CD4-positive, alpha-beta T cell (primary cell): ENCODE measurements at regions of chr16 and their contacts with region 1.

Region 1: GRCh38 chr16:30628627-30629540 is 18.7 kb upstream of the ZNF689 start:
- DNase-seq: peak; percentile 78 to 93 (median 87)
- ATAC-seq: peak; percentile 99
- H3K4me3 ChIP-seq: peak overlapping the region; percentile 29
- H3K4me3 Mint-ChIP-seq: peak overlapping the region; percentile 59
- H3K27ac ChIP-seq: no peak overlapping the region
- H3K27ac Mint-ChIP-seq: peak overlapping the region; percentile 71
- H3K4me1 ChIP-seq: peaks cover 13% of the 10 kb centered on the region
- H3K4me1 Mint-ChIP-seq: peaks cover 9% of the 10 kb centered on the region
- H3K27me3 ChIP-seq: no peaks in the 10 kb centered on the region
- H3K27me3 Mint-ChIP-seq: no peaks in the 10 kb centered on the region
- CTCF ChIP-seq: peak; percentile 90

Region 2: DNA sequence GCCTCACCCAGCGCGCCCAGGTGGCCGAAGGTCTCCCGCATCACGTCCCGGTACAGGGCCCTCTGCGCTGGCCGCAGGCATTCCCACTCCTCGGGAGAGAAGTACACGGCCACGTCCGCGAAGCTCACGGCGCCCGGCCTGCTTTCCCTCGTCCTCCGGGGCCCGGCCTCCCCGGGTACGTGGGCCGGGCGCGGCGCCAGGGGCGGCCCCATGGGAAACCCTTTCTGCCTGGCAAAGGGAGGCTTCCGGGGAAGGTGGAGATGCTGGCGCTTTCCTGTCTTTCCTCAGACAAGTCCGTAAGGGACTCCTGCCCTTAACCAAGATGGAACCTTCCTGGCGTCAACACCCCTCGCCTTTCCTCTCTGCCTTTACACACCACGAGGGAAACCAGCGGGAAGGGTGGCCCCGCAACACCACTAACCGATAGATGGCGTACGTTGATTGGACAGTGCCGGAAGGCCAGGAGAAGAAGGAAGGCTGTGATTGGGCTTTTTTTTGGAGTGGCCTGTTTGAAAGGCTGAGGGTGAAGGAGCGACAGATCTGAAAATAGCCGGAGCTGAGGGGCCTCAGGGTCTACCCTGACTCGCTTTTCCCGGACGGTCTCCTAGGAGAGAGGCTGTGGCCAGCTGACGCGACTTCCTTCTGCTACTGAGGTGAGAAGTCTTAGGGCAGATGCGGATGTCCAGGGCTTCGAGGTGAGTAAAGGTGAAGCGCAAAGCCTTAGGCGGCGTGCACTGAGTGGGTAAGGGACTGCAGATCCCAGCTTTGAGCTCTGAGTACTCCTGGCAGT is 43.3 kb before region 1 on chr16 and contains the start of gene ZNF785:
- CTCF ChIA-PET with region 1: interaction called, 4 read pairs
- POLR2A ChIA-PET with region 1: no interaction called
- intact Hi-C with region 1: loop called in 1 of 2 experiments (anchors 2 kb)
- DNase-seq: peak; percentile 81 to 97 (median 87)
- ATAC-seq: peak; percentile 99
- H3K4me3 ChIP-seq: peak within 1 kb of the TSS; percentile 64
- H3K4me3 Mint-ChIP-seq: peak within 1 kb of the TSS; percentile 92
- H3K27ac ChIP-seq: peak within 1 kb of the TSS; percentile 53 to 57
- H3K27ac Mint-ChIP-seq: peak within 1 kb of the TSS; percentile 93
- H3K4me1 ChIP-seq: peaks cover 26% of the 10 kb centered on the region
- H3K4me1 Mint-ChIP-seq: peaks cover 18% of the 10 kb centered on the region
- H3K27me3 ChIP-seq: no peaks in the 10 kb centered on the region
- H3K27me3 Mint-ChIP-seq: no peaks in the 10 kb centered on the region
- CTCF ChIP-seq: no peak
- total RNA-seq, gene ZNF785: 6.6 to 7.7 TPM

Region 3: DNA sequence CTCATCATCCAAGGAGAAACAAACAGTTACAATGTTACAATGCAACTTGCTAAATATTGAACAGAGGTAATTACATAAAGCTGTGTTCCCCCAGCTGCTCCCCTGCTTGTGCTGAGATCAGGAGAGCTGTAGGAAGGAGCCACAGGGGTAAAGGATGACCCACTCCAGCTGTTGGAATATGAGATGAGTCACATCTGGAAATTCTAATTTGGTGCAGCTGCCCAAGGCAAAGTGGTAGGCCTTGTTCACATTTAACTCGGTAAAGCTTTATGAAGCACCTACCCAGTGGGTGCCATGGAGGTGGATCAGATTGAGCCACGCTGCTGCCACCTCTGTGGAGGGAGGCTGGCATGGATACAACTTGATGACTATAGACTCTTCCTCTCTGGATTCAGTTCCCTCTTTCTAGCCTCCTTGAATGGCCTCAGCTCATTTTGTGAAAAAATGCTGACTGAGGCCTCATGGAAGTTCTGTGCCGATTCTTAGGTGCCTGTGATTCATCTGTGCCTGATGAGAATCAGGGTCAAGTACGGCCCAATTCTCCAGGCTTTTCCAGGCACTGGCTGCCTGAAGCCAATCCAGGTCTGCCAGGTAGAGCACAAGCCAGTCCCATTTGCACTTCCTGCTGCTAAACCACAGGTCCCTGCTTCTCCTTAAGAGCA is 26.1 kb before region 1 on chr16:
- CTCF ChIA-PET with region 1: interaction called, 15 read pairs
- POLR2A ChIA-PET with region 1: no interaction called
- intact Hi-C with region 1: no loop called
- DNase-seq: peak in 2 of 14 experiments; percentile 20 to 26
- ATAC-seq: no peak
- H3K4me3 ChIP-seq: no peak overlapping the region
- H3K4me3 Mint-ChIP-seq: no peak overlapping the region
- H3K27ac ChIP-seq: no peak overlapping the region
- H3K27ac Mint-ChIP-seq: no peak overlapping the region
- H3K4me1 ChIP-seq: peaks cover 7% of the 10 kb centered on the region
- H3K4me1 Mint-ChIP-seq: peaks cover 9% of the 10 kb centered on the region
- H3K27me3 ChIP-seq: no peaks in the 10 kb centered on the region
- H3K27me3 Mint-ChIP-seq: no peaks in the 10 kb centered on the region
- CTCF ChIP-seq: no peak

Region 4: GRCh38 chr16:30609926-30610839 is 18.7 kb before region 1 on chr16 and contains the start of gene ZNF689:
- CTCF ChIA-PET with region 1: interaction called, 8 read pairs
- POLR2A ChIA-PET with region 1: interaction called, 7 read pairs
- intact Hi-C with region 1: loop called (anchors 1 kb)
- DNase-seq: peak; percentile 88 to 97 (median 94)
- ATAC-seq: peak; percentile 92
- H3K4me3 ChIP-seq: peak within 1 kb of the TSS; percentile 74
- H3K4me3 Mint-ChIP-seq: peak within 1 kb of the TSS; percentile 91
- H3K27ac ChIP-seq: peak within 1 kb of the TSS; percentile 86 to 89
- H3K27ac Mint-ChIP-seq: peak within 1 kb of the TSS; percentile 93
- H3K4me1 ChIP-seq: peaks cover 26% of the 10 kb centered on the region
- H3K4me1 Mint-ChIP-seq: peaks cover 23% of the 10 kb centered on the region
- H3K27me3 ChIP-seq: no peaks in the 10 kb centered on the region
- H3K27me3 Mint-ChIP-seq: no peaks in the 10 kb centered on the region
- CTCF ChIP-seq: no peak
- total RNA-seq, gene ZNF689: 15.3 to 15.7 TPM

Region 5: DNA sequence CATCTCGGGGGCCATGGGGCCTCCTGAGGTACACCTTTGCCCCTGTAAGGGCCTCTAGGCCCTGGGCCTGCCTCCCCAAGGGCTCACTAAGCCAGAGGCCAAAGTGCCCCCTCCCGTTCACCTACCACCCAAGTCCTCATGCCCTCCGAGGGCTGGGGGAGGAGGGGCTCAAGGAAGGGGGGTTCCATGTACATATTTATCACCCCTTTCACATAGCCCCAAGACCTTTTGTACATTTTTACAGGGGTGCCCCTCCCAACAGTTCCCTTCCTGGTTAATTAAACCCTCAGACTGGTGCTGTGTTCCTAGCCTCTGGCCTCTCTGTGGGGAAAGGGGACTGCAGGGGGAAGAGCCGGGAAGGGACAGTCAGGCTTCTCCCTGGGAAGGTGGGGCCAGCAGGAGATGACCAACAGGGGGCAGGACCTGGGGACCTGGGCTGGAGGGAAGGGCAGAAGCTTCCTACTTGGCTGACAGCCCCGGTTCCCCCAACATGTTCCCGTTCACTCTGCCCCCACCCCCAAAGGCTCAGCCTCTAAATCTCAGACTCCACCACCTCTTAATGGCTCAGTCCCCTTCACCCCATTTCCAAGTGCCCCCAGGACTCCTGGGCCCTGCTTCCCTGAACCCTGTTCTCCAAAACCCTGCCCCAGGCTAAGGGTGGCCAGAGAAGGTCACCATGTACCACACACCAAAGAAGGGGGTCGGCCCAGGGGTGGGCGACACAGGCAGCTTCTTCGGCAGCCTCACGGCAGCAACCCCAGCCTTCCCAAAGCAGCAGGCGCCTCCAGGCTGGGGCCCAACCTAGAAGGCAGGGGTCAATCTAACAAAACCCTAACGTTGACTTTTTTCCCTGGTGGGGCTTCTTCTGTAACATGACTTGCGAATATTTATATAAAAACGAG is 41.3 kb after region 1 on chr16:
- CTCF ChIA-PET with region 1: no interaction called
- POLR2A ChIA-PET with region 1: no interaction called
- intact Hi-C with region 1: no loop called
- DNase-seq: peak in 1 of 14 experiments; percentile 28
- ATAC-seq: no peak
- H3K4me3 ChIP-seq: no peak overlapping the region
- H3K4me3 Mint-ChIP-seq: no peak overlapping the region
- H3K27ac ChIP-seq: no peak overlapping the region
- H3K27ac Mint-ChIP-seq: no peak overlapping the region
- H3K4me1 ChIP-seq: peaks cover 6% of the 10 kb centered on the region
- H3K4me1 Mint-ChIP-seq: no peaks in the 10 kb centered on the region
- H3K27me3 ChIP-seq: no peaks in the 10 kb centered on the region
- H3K27me3 Mint-ChIP-seq: no peaks in the 10 kb centered on the region
- CTCF ChIP-seq: no peak

Region 6: GRCh38 chr16:30692381-30693064 is 63.6 kb after region 1 on chr16:
- CTCF ChIA-PET with region 1: interaction called, 10 read pairs
- POLR2A ChIA-PET with region 1: interaction called, 3 read pairs
- intact Hi-C with region 1: no loop called
- DNase-seq: no peak
- ATAC-seq: no peak
- H3K4me3 ChIP-seq: no peak overlapping the region
- H3K4me3 Mint-ChIP-seq: no peak overlapping the region
- H3K27ac ChIP-seq: no peak overlapping the region
- H3K27ac Mint-ChIP-seq: no peak overlapping the region
- H3K4me1 ChIP-seq: peaks cover 16% of the 10 kb centered on the region
- H3K4me1 Mint-ChIP-seq: peaks cover 16% of the 10 kb centered on the region
- H3K27me3 ChIP-seq: no peaks in the 10 kb centered on the region
- H3K27me3 Mint-ChIP-seq: no peaks in the 10 kb centered on the region
- CTCF ChIP-seq: no peak